Activated CD4-positive, alpha-beta memory T cell treated with anti-CD3 and anti-CD28 coated beads, Interleukin-2, amount 10 ng/mL, durations not matched to agents 7 days and 5 days (primary cell): ENCODE measurements at regions of chr6 and their contacts with region 1.

Region 1: GRCh38 chr6:24494821-24495795 is at the start of gene ALDH5A1:
- DNase-seq: peak; percentile 70
- H3K4me3 Mint-ChIP-seq: peak within 1 kb of the TSS; percentile 71
- H3K27ac Mint-ChIP-seq: no peak within 1 kb of the TSS
- H3K4me1 Mint-ChIP-seq: peaks cover 14% of the 10 kb centered on the region
- H3K27me3 Mint-ChIP-seq: no peaks in the 10 kb centered on the region
- total RNA-seq, gene ALDH5A1: 2.5 to 3.7 TPM

Region 2: DNA sequence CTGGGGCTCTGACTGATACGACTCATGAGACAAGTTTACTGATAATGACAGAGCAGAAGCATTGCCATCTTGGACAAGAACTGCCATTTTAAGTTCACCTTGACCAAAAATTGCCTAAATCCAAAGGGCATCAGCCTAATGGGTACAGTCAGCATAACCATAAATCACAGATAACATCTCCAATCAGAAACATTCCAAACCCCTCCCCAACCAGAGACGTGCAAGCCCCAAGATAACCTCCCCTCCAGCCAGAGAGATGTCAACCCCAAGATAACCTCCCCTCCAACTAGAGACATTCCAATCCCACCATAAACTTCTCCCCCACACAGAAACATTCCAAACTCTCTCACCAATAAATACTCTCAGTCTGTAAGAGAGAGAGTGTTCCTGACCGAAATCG is 16.2 kb before region 1 on chr6:
- CTCF ChIA-PET with region 1: interaction called, 10 read pairs
- POLR2A ChIA-PET with region 1: interaction called, 3 read pairs
- DNase-seq: no peak
- H3K4me3 Mint-ChIP-seq: no peak overlapping the region
- H3K27ac Mint-ChIP-seq: no peak overlapping the region
- H3K4me1 Mint-ChIP-seq: no peaks in the 10 kb centered on the region
- H3K27me3 Mint-ChIP-seq: no peaks in the 10 kb centered on the region

Region 3: DNA sequence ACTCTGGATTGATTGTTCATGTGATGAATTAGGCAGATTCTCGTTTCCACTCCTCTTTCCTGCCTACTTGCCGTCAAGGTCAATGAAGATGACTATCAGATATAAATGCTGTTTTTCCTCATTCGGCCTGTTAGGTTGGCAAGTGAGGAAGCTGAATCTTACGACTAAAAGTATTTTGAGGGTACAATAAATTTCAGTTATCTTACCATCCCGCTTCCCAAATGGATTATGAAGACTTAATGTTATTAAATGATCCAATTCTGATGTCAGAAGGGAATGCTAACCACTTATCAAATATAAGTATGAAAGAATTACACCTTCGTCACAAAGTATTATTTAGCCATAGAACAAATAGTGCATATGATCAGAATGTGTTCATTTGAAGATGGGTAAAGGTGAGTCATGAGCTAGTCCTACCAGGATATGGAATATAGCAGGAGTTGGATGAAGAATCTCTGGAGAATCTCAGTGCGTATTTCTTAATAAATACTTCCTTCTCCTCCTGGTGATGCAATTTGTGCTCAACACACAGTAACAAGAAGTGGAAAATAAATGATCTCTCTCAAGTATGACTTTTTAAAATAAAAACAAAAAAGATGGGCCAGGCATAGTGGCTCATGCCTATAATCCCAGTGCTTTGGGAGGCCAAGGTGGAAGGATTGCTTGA is 10.3 kb before region 1 on chr6:
- CTCF ChIA-PET with region 1: interaction called, 11 read pairs
- POLR2A ChIA-PET with region 1: interaction called, 7 read pairs
- DNase-seq: no peak
- H3K4me3 Mint-ChIP-seq: no peak overlapping the region
- H3K27ac Mint-ChIP-seq: no peak overlapping the region
- H3K4me1 Mint-ChIP-seq: peaks cover 7% of the 10 kb centered on the region
- H3K27me3 Mint-ChIP-seq: no peaks in the 10 kb centered on the region

Region 4: DNA sequence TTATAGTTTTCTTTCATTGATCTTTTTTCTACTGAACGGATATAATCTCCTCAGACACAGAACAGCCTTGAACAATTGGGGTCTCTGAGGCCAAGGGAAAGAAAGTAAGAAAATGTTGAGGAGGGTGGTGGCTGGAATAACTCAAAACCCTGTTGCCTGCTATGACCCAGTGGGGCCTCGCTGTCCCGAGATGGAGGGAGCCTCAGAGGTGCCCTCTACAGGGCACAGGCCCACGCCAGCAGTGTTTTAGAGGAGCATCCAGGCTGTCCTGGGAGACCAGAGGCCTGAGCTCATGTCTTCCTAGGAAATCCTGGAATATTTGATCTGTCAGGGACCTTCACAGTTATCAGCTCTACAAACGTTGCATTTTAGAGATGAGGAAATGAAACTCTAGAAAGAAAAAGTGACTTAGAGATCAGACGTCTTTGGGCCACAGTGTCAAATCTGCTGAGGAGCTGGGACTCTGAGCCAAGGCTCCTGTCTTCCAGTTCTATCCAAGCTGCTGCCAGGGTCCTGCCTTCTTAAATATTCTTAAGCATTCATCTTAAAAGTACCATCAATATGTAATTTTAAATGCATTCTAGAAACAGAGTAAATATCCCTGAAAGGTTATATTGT is 25.9 kb after region 1 on chr6:
- CTCF ChIA-PET with region 1: interaction called, 17 read pairs
- POLR2A ChIA-PET with region 1: no interaction called
- DNase-seq: peak; percentile 41
- H3K4me3 Mint-ChIP-seq: no peak overlapping the region
- H3K27ac Mint-ChIP-seq: no peak overlapping the region
- H3K4me1 Mint-ChIP-seq: peaks cover 2% of the 10 kb centered on the region
- H3K27me3 Mint-ChIP-seq: no peaks in the 10 kb centered on the region